A673 (cell line): ENCODE measurements at regions of chr9 and their contacts with region 1.

Region 1: GRCh38 chr9:21789541-21790037 is 12.8 kb upstream of the MTAP start:
- DNase-seq: peak; percentile 77
- H3K4me3 ChIP-seq: peak overlapping the region; percentile 18
- H3K27ac ChIP-seq: no peak overlapping the region
- H3K4me1 ChIP-seq: no peaks in the 10 kb centered on the region
- H3K27me3 ChIP-seq: peaks cover 17% of the 10 kb centered on the region
- CTCF ChIP-seq: peak; percentile 72

Region 2: DNA sequence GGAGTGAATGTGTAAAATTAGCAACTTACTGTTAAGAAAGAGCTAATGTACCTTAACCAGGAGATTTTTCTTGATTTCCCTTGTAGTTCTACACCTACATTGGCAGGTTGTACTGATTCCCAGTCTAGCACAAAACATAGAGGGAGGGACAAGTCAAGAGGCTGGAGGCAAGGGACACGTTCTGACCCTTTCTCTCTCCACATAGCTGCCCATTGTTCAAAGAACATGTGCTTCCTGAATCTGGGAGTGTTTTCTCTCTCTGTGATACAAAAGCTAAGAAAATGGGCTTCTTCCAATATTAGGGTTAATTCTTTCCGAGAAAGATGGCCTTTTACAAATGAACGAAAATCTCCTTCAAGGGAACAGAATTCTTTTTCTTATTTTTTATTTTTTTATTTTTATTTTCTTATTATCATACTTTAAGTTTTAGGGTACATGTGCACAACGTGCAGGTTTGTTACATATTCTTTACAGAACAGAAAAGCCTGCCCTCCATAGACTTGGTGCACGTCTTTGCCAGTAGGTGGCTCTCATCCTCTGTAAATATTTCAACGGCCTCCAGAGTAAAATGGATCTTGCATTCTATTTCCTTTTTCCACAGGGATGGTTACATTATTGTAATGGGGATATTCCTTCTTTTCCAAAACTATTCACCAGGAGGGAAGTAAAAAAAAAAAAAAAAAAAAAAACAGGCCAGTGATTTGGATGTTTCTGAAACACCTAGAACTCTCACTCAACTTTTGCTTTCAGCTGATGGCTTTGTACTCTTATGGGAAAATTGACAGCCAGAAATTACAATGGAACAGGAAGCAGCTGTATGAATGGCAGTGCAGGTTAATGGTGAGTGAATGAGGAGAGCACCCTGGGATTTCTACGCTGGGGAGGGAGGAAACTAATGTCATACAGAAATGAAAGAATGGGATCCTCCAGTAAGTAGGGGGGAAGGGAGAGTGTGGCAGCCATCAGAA is 471.3 kb before region 1 on chr9:
- CTCF ChIA-PET with region 1: interaction called, 5 read pairs
- POLR2A ChIA-PET with region 1: no interaction called
- intact Hi-C with region 1: loop called (anchors 5 kb)
- DNase-seq: peak; percentile 33
- H3K4me3 ChIP-seq: no peak overlapping the region
- H3K27ac ChIP-seq: no peak overlapping the region
- H3K4me1 ChIP-seq: no peaks in the 10 kb centered on the region
- H3K27me3 ChIP-seq: peaks cover 6% of the 10 kb centered on the region
- CTCF ChIP-seq: peak; percentile 57

Region 3: GRCh38 chr9:21381448-21382339 is 407.9 kb before region 1 on chr9:
- CTCF ChIA-PET with region 1: no interaction called
- POLR2A ChIA-PET with region 1: no interaction called
- intact Hi-C with region 1: no loop called
- DNase-seq: no peak
- H3K4me3 ChIP-seq: no peak overlapping the region
- H3K27ac ChIP-seq: no peak overlapping the region
- H3K4me1 ChIP-seq: no peaks in the 10 kb centered on the region
- H3K27me3 ChIP-seq: peaks cover 67% of the 10 kb centered on the region
- CTCF ChIP-seq: no peak

Region 4: DNA sequence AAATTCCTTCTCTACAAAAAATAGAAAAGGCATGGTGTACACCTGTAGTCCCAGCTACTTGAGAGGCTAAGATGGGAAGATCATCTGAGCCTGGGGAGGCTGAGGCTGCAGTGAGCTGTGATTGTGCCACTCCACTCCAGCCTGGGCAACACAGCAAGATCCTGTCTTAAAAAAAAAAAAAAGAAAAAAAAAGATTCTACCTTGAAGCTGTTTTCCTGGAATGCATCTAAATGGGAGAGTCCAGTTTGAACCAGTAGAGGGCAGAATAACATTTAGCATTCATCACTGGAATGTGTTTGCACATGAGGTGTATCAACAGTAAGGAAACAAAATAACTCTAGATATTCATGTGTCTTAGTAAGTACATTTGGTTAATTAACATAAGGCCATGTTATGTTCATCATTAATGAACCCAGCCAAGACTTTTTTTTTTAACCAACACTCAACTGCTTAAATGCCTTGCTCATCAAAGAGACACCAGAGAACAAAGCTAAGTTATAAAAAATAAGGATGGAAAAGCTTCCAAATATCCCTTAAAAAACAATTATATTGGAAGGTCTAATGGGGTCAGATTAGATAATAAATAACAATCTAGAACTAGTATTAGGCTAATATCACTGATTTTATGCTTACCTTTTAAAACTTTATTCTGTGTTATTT is 323.6 kb before region 1 on chr9:
- CTCF ChIA-PET with region 1: interaction called, 5 read pairs
- POLR2A ChIA-PET with region 1: no interaction called
- intact Hi-C with region 1: loop called (anchors 5 kb)
- DNase-seq: peak; percentile 35
- H3K4me3 ChIP-seq: no peak overlapping the region
- H3K27ac ChIP-seq: no peak overlapping the region
- H3K4me1 ChIP-seq: no peaks in the 10 kb centered on the region
- H3K27me3 ChIP-seq: peaks cover 4% of the 10 kb centered on the region
- CTCF ChIP-seq: peak; percentile 59

Region 5: GRCh38 chr9:21585756-21586752 is 203.5 kb before region 1 on chr9:
- CTCF ChIA-PET with region 1: no interaction called
- POLR2A ChIA-PET with region 1: no interaction called
- intact Hi-C with region 1: loop called (anchors 10 kb)
- DNase-seq: no peak
- H3K4me3 ChIP-seq: no peak overlapping the region
- H3K27ac ChIP-seq: no peak overlapping the region
- H3K4me1 ChIP-seq: no peaks in the 10 kb centered on the region
- H3K27me3 ChIP-seq: no peaks in the 10 kb centered on the region
- CTCF ChIP-seq: no peak

Region 6: DNA sequence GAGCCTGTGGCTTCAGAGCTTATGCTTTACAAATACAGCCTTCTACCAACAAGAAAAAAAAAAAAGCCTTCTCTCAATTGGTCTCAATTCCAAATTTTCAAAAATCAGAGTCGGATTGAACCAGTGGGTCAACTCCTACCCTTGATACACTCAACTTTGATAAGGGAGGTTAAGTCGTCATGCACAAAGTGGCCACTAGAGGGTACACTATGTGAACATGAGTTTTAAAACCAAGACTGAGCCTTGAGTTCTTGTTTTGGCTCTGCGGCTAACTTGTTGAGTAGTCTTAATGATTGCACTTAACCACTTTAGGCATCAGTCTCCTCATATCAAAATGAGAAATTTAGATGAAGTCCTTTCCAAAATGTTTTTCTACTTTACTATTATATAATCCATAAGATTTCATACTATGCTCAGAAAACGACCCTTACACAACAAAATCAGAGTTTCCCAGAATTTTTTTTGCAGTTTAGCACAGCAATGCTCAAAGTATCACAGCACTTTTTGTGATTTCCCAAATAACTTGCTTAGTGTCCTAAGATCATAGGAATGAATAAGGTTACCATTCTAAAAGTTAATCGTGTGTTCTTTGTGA is 80.0 kb before region 1 on chr9:
- CTCF ChIA-PET with region 1: interaction called, 4 read pairs
- POLR2A ChIA-PET with region 1: no interaction called
- intact Hi-C with region 1: loop called (anchors 1 kb)
- DNase-seq: peak; percentile 57
- H3K4me3 ChIP-seq: no peak overlapping the region
- H3K27ac ChIP-seq: no peak overlapping the region
- H3K4me1 ChIP-seq: no peaks in the 10 kb centered on the region
- H3K27me3 ChIP-seq: no peaks in the 10 kb centered on the region
- CTCF ChIP-seq: peak; percentile 69